ENCODE measurements at regions of chr9 and their contacts with region 1.

Region 1: GRCh38 chr9:133726401-133727276 is 11.5 kb downstream of the SARDH start:
- DNase-seq: no peak
- H3K4me3 ChIP-seq: no peak overlapping the region
- CTCF ChIP-seq: peak; percentile 51

Region 2: DNA sequence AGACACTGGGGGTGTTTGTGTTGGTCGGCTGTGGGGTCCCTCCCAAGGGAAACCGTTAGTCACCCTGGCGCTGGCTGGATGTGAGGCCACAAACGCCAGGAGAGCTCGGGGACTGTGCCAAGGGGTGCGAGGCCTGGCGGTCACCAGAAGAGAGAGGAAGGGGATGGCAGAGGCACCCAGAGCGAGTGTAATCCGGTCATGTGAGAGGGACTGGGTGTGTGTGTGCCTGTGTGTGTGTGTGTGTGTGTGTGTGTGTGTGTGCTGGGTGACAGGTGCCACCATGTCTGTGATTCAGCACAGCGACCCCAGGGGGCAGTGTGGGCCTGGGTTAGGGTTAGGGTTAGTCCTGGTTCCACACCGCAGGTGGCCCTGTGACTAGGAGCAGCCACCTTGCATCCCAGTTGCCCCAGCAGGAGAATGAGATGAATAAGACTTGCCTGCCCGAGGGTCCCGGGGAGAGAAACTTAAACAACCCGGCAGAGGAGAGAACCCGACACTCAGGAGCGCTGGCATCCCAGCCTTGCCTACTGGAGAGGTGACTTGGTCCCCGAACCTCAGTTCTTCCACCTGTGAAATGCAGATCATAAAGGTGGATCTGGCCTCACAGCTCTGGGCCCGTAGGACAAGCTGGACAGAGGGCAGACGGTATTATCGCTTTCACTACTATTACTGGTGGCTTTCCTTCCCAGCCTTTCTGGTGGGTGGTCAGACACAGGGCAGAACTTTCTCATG is 193.5 kb before region 1 on chr9:
- CTCF ChIA-PET with region 1: interaction called, 15 read pairs
- POLR2A ChIA-PET with region 1: no interaction called
- DNase-seq: no peak
- H3K4me3 ChIP-seq: no peak overlapping the region
- CTCF ChIP-seq: peak; percentile 65

Region 3: DNA sequence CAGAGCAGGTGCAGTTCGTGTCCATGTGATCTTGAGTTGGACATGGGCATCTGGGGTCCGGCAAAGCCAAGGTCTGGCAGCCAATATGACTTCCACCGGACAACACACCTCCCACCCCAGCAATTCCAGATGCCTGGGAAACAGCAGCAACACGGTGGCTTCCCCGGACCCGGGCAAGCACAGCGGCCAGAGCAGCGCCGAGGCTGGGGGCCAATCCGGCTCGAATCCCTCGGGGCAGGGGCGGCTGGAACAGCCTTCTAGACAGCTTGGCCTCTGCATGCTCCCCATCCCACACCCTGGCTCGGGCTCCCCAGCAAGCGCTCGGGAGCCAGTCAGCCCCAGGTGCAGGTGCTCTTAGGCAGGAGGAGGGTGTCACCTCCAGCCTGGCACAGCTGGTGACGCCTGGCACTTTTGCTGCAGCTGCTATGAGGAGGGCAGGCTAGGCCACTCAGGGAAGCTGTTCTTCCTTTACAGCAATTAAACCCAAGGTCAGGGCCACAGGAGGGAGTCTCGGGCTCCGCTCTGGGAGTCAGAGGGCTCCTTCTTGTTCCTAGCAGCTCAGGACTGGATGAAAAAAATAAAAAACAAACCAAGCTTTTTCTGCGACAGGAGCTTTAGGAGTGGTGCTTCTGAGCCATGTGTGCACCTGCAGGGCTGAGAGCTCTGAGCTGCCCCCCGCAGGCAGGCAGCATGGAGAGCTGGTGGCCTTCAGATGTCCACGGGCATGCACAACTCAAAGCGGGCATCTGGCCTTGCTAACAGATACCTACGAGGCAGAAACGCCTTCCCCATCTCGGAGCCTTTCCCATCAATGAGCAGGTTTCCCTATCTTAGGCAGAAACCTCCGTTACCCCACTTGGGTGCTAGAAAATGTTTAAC is 62.2 kb before region 1 on chr9:
- CTCF ChIA-PET with region 1: no interaction called
- POLR2A ChIA-PET with region 1: no interaction called
- DNase-seq: no peak
- H3K4me3 ChIP-seq: no peak overlapping the region
- CTCF ChIP-seq: no peak

Region 4: GRCh38 chr9:133869674-133870405 is 143.2 kb after region 1 on chr9:
- CTCF ChIA-PET with region 1: no interaction called
- POLR2A ChIA-PET with region 1: no interaction called
- DNase-seq: no peak
- H3K4me3 ChIP-seq: no peak overlapping the region
- CTCF ChIP-seq: no peak